Transverse colon (tissue), 4 donors: ENCODE measurements at regions of chr12 and their contacts with region 1.

Region 1: GRCh38 chr12:7219599-7220243 is 30.2 kb downstream of the PEX5 start:
- DNase-seq: peak; percentile 75
- H3K4me3 ChIP-seq: no peak overlapping the region
- H3K27ac ChIP-seq: no peak overlapping the region
- H3K4me1 ChIP-seq: no peaks in the 10 kb centered on the region
- H3K27me3 ChIP-seq: no peaks in the 10 kb centered on the region
- CTCF ChIP-seq: peak; percentile 76 to 83 (median 81)
- EP300 ChIP-seq: no peak
- POLR2A ChIP-seq: no peak

Region 2: GRCh38 chr12:7460375-7461259 is 240.9 kb after region 1 on chr12:
- in situ Hi-C with region 1: loop called in 3 of 4 experiments (anchors 5 to 10 kb)
- intact Hi-C with region 1: no loop called
- DNase-seq: peak; percentile 54
- H3K4me3 ChIP-seq: no peak overlapping the region
- H3K27ac ChIP-seq: no peak overlapping the region
- H3K4me1 ChIP-seq: no peaks in the 10 kb centered on the region
- H3K27me3 ChIP-seq: no peaks in the 10 kb centered on the region
- CTCF ChIP-seq: peak; percentile 65 to 81 (median 74)
- EP300 ChIP-seq: no peak
- POLR2A ChIP-seq: no peak

Region 3: DNA sequence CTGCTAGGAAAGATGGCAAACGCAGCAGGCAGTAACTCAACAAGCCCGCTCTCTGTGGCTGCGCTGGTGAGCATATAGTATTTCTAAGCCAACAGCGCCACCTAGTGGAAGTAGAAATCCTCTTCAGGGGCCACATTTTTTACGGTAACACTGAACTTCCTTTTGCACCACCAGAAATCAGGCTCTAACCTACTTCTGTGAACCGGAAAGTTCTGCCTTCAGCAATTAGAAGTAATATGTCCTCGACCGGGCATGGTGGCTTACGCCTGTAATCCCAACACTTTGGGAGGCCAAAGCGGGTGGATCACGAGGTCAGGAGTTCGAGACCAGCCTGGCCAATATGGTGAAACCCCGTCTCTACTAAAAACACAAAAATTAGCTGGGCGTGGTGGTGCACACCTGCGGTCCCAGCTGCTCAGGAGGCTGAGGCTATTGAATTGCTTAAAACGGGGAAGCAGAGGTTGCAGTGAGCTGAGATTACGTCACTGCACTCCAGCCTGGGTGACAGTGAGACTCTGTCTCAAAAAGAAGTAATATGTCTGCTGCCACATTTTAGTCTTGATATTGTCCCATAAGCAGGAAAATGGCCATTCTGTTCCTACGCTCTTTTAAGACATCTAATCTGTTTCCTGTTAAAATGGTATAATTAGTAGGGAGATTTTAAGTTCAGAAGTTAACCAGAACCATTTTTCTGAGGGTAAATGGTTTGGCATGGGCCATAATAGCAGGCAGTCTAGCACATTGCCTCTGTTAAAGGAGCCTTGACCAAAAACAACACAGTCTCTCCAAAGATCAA is 419.2 kb after region 1 on chr12:
- in situ Hi-C with region 1: loop called (anchors 5 to 10 kb)
- intact Hi-C with region 1: loop called (anchors 5 kb)
- DNase-seq: peak; percentile 75
- H3K4me3 ChIP-seq: peak overlapping the region in 1 of 4 donors; percentile 36
- H3K27ac ChIP-seq: no peak overlapping the region
- H3K4me1 ChIP-seq: peaks cover 0 to 10% (median 4%) of the 10 kb centered on the region in 4 donors
- H3K27me3 ChIP-seq: peaks cover 12% of the 10 kb centered on the region
- CTCF ChIP-seq: peak; percentile 86 to 93 (median 89)
- EP300 ChIP-seq: no peak
- POLR2A ChIP-seq: no peak

Region 4: DNA sequence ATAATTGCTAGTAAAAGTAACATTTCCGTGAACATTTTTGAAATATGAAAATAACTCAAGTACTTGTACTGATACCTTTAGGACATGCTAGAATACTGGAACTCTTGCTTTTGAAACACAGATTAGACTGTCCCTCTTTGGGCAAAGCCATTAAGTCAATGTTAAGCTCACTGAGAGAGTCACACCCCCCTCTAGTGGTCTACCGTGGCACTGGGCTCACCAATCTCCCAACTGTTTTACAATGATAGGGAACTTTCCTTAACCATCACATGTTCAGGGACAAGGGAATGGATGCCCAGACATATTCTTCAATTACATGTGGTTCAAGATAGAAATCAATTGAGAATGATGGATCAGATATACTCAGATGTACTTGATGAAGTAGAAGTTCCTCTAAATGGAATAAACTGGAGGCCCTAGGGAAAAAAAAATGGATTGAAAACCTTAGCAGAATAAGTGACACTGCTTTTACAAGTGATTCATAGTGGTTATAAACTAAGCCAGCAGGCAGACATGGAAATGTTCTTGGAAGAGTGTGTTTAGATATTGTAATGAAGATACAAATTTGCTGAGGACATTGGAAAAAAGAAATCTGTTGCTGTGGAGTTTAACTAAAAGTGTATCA is 587.3 kb after region 1 on chr12:
- in situ Hi-C with region 1: loop called in 1 of 4 experiments (anchors 10 kb)
- intact Hi-C with region 1: no loop called
- DNase-seq: peak; percentile 59
- H3K4me3 ChIP-seq: no peak overlapping the region
- H3K27ac ChIP-seq: no peak overlapping the region
- H3K4me1 ChIP-seq: no peaks in the 10 kb centered on the region
- H3K27me3 ChIP-seq: no peaks in the 10 kb centered on the region
- CTCF ChIP-seq: peak; percentile 26 to 77 (median 66)
- EP300 ChIP-seq: no peak
- POLR2A ChIP-seq: no peak